ENCODE measurements at regions of chr4 and their contacts with region 1.

Region 1: DNA sequence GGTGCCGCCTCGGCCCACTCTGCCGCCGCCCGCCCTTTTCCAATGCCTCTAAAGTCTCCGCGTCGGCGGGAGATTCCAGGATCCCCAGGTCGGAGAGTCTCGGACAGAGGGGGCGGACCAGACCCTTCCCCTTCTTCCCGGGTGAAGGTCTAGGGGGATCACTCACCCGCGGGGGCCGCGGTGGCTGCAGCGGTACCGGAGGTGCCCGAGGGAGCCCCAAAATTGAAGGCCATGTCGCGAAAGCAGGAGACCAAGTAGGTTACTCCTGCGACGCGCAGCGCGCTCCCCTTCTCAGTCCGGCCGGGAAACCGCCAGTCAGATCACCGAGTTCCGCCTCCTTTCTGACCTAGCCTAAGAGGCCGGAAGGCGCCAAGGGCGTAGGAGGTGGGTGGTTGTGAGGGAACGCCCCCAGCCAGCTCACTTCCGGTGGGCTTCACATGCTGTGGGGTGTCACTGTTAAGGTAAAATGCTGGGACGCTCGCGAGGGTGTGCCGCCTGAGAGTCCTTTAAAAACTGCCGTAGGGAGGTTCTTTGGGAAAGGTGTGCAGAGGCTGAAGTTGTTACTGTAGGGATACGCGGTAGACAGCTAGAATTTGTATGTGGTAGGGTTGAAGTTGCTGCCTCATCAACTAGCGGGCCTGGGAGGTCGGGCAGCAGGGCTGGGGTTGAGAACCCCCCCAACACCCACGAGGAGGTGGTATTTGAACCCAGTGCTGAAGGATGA is at the start of gene NUP54:
- DNase-seq: peak; percentile 92 to 97
- ATAC-seq: peak; percentile 97 to 100 (median 99)
- H3K4me3 ChIP-seq: peak within 1 kb of the TSS; percentile 96
- H3K4me3 Mint-ChIP-seq: peak within 1 kb of the TSS; percentile 96
- H3K27ac ChIP-seq: peak within 1 kb of the TSS; percentile 87
- H3K27ac Mint-ChIP-seq: peak within 1 kb of the TSS; percentile 95 to 97
- H3K4me1 ChIP-seq: peaks cover 10% of the 10 kb centered on the region
- H3K4me1 Mint-ChIP-seq: peaks cover 21 to 29% of the 10 kb centered on the region in 2 donors
- H3K27me3 ChIP-seq: no peaks in the 10 kb centered on the region
- H3K27me3 Mint-ChIP-seq: peaks cover 0 to 2% of the 10 kb centered on the region in 2 donors
- CTCF ChIP-seq: no peak
- total RNA-seq, gene NUP54: 102 to 114 (median 108) TPM

Region 2: GRCh38 chr4:75849461-75849860 is 298.8 kb before region 1 on chr4:
- intact Hi-C with region 1: no loop called
- DNase-seq: no peak
- ATAC-seq: no peak
- H3K4me3 ChIP-seq: no peak overlapping the region
- H3K4me3 Mint-ChIP-seq: no peak overlapping the region
- H3K27ac ChIP-seq: no peak overlapping the region
- H3K27ac Mint-ChIP-seq: no peak overlapping the region
- H3K4me1 ChIP-seq: no peaks in the 10 kb centered on the region
- H3K4me1 Mint-ChIP-seq: peaks cover 0 to 4% of the 10 kb centered on the region in 2 donors
- H3K27me3 ChIP-seq: no peaks in the 10 kb centered on the region
- H3K27me3 Mint-ChIP-seq: peaks cover 0 to 10% of the 10 kb centered on the region in 2 donors
- CTCF ChIP-seq: no peak

Region 3: GRCh38 chr4:75989846-75990528 is 158.3 kb before region 1 on chr4:
- intact Hi-C with region 1: loop called (anchors 1 kb)
- DNase-seq: peak in 1 of 2 donors; percentile 25
- ATAC-seq: no peak
- H3K4me3 ChIP-seq: peak overlapping the region; percentile 91
- H3K4me3 Mint-ChIP-seq: peak overlapping the region; percentile 92
- H3K27ac ChIP-seq: peak overlapping the region; percentile 27
- H3K27ac Mint-ChIP-seq: peak overlapping the region; percentile 78 to 80
- H3K4me1 ChIP-seq: peaks cover 13% of the 10 kb centered on the region
- H3K4me1 Mint-ChIP-seq: peaks cover 24 to 28% of the 10 kb centered on the region in 2 donors
- H3K27me3 ChIP-seq: no peaks in the 10 kb centered on the region
- H3K27me3 Mint-ChIP-seq: peaks cover 2 to 7% of the 10 kb centered on the region in 2 donors
- CTCF ChIP-seq: no peak

Region 4: GRCh38 chr4:76213415-76214176 is 65.3 kb after region 1 on chr4 and contains the start of gene SCARB2:
- intact Hi-C with region 1: loop called (anchors 5 kb)
- DNase-seq: peak; percentile 75 to 88
- ATAC-seq: peak; percentile 73 to 86 (median 81)
- H3K4me3 ChIP-seq: peak within 1 kb of the TSS; percentile 80
- H3K4me3 Mint-ChIP-seq: peak within 1 kb of the TSS; percentile 99
- H3K27ac ChIP-seq: peak within 1 kb of the TSS; percentile 86
- H3K27ac Mint-ChIP-seq: peak within 1 kb of the TSS; percentile 92 to 97
- H3K4me1 ChIP-seq: peaks cover 28% of the 10 kb centered on the region
- H3K4me1 Mint-ChIP-seq: peaks cover 42 to 48% of the 10 kb centered on the region in 2 donors
- H3K27me3 ChIP-seq: no peaks in the 10 kb centered on the region
- H3K27me3 Mint-ChIP-seq: peaks cover 3 to 6% of the 10 kb centered on the region in 2 donors
- CTCF ChIP-seq: no peak
- total RNA-seq, gene SCARB2: 22.0 to 39.0 (median 30.4) TPM